ENCODE measurements at regions of chr17 and their contacts with region 1.

Region 1: GRCh38 chr17:27879987-27880608 is 13.1 kb downstream of the LYRM9 start:
- DNase-seq: peak; percentile 81
- ATAC-seq: peak; percentile 90
- H3K4me3 Mint-ChIP-seq: no peak overlapping the region
- H3K27ac Mint-ChIP-seq: peak overlapping the region; percentile 55
- H3K4me1 Mint-ChIP-seq: peaks cover 32% of the 10 kb centered on the region
- H3K27me3 Mint-ChIP-seq: no peaks in the 10 kb centered on the region

Region 2: DNA sequence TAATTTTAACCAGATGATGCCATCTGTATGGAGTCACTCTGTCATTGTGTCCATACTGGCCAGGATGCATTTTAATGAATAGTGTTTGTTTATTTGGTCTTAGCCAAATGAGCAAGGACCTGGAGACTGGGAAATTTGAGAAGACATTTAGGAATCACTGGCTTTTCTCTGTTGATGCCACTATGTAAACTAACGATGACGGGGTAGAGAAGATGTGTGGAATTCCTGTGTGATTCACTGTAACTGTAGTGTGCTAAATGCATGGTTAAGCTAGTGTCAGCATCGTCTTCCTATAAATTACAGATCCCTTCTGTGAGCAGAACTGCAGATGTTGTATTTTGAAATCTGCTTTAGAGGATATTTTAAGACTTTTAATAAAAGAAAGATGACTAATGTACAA is 146.3 kb before region 1 on chr17:
- CTCF ChIA-PET with region 1: no interaction called
- POLR2A ChIA-PET with region 1: no interaction called
- DNase-seq: no peak
- ATAC-seq: no peak
- H3K4me3 Mint-ChIP-seq: no peak overlapping the region
- H3K27ac Mint-ChIP-seq: no peak overlapping the region
- H3K4me1 Mint-ChIP-seq: no peaks in the 10 kb centered on the region
- H3K27me3 Mint-ChIP-seq: peaks cover 40% of the 10 kb centered on the region

Region 3: DNA sequence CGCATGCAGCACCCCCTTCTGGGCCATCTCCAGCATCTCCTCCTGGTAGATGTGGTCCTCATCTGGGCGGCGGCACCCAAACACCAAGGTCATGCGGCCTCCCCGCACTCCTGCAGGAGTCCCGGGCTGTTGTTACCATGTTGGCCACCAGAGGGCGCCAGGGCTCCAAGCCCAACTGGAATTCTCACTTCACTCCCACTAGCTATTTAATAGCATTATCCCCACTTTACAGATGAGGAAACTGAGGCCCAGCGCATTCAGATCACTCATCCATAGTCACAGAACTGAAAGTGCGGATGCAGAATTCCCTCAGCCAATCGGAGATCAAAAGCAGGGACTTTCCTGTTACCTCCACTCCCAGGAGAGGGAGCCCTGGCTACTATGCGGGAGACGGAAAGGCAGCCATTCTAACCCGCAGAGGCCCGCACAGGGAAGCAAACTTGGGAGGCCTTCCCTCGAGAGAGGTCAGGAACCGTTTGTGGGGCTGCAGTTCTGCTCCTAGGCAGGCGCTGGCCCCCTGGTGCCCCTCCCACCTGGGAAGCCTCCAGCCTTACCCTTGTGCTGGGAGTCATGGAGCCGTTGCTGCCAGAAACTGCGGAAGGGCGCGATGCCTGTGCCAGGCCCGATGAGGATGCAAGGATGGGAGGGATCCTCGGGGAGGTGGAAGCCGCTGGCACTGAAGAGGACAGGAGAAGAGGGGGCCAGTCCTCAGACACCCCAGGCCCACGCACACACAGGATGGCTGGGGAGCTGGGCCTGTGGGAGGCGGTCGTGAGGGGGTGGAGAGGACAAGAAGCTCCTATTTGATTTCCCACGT is 119.8 kb before region 1 on chr17:
- CTCF ChIA-PET with region 1: interaction called, 146 read pairs
- POLR2A ChIA-PET with region 1: no interaction called
- DNase-seq: peak; percentile 73
- ATAC-seq: peak; percentile 59
- H3K4me3 Mint-ChIP-seq: no peak overlapping the region
- H3K27ac Mint-ChIP-seq: no peak overlapping the region
- H3K4me1 Mint-ChIP-seq: no peaks in the 10 kb centered on the region
- H3K27me3 Mint-ChIP-seq: no peaks in the 10 kb centered on the region

Region 4: GRCh38 chr17:27846042-27846655 is 33.9 kb before region 1 on chr17:
- CTCF ChIA-PET with region 1: interaction called, 19 read pairs
- POLR2A ChIA-PET with region 1: no interaction called
- DNase-seq: peak; percentile 73
- ATAC-seq: peak; percentile 84
- H3K4me3 Mint-ChIP-seq: peak overlapping the region; percentile 64
- H3K27ac Mint-ChIP-seq: peak overlapping the region; percentile 74
- H3K4me1 Mint-ChIP-seq: peaks cover 36% of the 10 kb centered on the region
- H3K27me3 Mint-ChIP-seq: peaks cover 5% of the 10 kb centered on the region

Region 5: GRCh38 chr17:27856676-27857432 is 23.2 kb before region 1 on chr17:
- CTCF ChIA-PET with region 1: interaction called, 12 read pairs
- POLR2A ChIA-PET with region 1: no interaction called
- DNase-seq: no peak
- ATAC-seq: no peak
- H3K4me3 Mint-ChIP-seq: no peak overlapping the region
- H3K27ac Mint-ChIP-seq: no peak overlapping the region
- H3K4me1 Mint-ChIP-seq: peaks cover 11% of the 10 kb centered on the region
- H3K27me3 Mint-ChIP-seq: peaks cover 16% of the 10 kb centered on the region

Region 6: GRCh38 chr17:27892866-27893769 is 13.0 kb after region 1 on chr17 and contains the start of gene LYRM9:
- CTCF ChIA-PET with region 1: interaction called, 71 read pairs
- POLR2A ChIA-PET with region 1: interaction called, 6 read pairs
- DNase-seq: peak; percentile 93
- ATAC-seq: peak; percentile 99
- H3K4me3 Mint-ChIP-seq: peak within 1 kb of the TSS; percentile 77
- H3K27ac Mint-ChIP-seq: peak within 1 kb of the TSS; percentile 49
- H3K4me1 Mint-ChIP-seq: peaks cover 23% of the 10 kb centered on the region
- H3K27me3 Mint-ChIP-seq: peaks cover 22% of the 10 kb centered on the region
- total RNA-seq, gene LYRM9: 1.6 to 3.6 TPM